ENCODE measurements at regions of chr20 and their contacts with region 1.

Region 1: DNA sequence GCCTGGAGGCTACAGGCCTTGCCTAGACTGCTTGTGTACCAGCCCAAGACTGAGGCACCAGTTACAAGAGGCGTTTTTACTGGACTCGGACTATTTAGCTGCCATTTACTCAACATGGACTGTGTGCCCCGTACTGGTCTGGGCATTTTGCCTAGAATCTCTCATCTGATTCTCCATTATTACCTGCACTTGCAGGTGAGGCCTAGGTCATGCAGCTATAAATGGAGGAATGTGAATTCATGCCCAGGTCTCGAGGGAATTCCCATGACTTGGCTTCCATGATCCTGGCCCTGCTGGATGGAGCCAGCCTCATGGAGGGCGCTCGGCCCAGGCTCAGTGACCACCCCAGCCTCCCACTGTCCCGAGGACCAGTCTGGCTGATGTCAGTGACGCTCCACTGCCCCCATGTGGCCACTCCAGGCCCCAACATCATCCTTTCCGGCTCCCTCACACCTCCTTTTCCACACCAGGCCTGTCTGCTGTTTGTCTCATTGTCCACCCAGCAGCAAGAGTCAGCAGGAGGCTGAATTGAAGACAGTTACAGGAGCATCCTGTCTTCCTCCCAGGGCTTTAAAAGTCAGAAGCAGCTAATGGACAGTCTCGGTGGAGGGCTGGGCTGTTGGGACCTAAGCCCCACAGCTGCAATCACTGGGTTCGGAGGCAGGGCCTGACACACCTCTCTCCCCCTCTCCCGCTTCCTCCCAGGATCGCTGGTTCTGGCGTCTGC is 8.7 kb downstream of the MMP24OS start:
- DNase-seq: peak; percentile 52 to 63
- ATAC-seq: peak; percentile 43 to 76 (median 70)
- H3K4me3 ChIP-seq: no peak overlapping the region
- H3K27ac ChIP-seq: no peak overlapping the region
- H3K4me1 ChIP-seq: peaks cover 0 to 16% (median under 1%) of the 10 kb centered on the region in 9 donors
- H3K27me3 ChIP-seq: no peaks in the 10 kb centered on the region
- CTCF ChIP-seq: peak; percentile 43 to 78 (median 72)

Region 2: DNA sequence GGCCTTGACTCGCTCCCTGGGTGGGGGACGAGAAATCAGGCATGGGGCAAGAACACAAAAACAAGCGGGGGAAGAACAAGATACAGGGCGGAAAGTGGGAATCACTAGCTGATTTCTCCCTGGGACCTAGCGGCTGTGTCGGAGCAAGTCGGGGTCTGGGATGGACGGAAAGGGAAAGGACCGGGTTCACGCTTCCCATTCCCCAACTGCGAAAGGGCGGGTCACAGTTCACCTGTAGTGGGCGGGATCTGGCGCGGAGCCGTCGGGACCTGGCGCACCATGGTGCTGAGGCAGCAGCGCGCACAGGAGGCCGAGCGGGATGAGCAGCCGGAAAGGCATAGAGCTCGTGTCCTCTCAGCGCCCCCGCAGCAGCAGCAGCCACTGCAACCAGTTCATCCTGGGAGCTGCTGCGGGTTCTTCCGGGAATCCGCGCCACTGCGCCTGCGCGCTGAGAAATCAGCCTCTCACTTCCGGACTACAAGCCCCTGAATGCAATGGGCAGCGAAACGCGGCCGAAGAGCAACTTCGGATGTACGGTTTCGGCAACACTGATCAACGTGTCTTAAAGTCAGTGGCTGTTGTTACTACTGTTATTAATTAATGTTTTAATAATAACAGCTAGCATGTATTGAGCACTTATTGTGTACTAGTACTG is 122.2 kb before region 1 on chr20 and contains the start of gene EDEM2:
- intact Hi-C with region 1: loop called in 5 of 10 experiments (anchors 5 to 10 kb)
- DNase-seq: peak; percentile 94 to 97
- ATAC-seq: peak; percentile 95 to 98 (median 96)
- H3K4me3 ChIP-seq: peak within 1 kb of the TSS; percentile 65 to 98 (median 86)
- H3K27ac ChIP-seq: peak within 1 kb of the TSS in 9 of 10 donors; percentile 74 to 88 (median 79)
- H3K4me1 ChIP-seq: peaks cover 6 to 44% (median 27%) of the 10 kb centered on the region in 9 donors
- H3K27me3 ChIP-seq: no peaks in the 10 kb centered on the region
- CTCF ChIP-seq: peak in 1 of 9 donors; percentile 7
- total RNA-seq, gene EDEM2: 7.2 to 26.1 (median 11.0) TPM

Region 3: GRCh38 chr20:35318502-35319157 is 49.4 kb after region 1 on chr20:
- intact Hi-C with region 1: no loop called
- DNase-seq: peak in 1 of 2 donors; percentile 23
- ATAC-seq: peak in 7 of 8 donors; percentile 39 to 90 (median 59)
- H3K4me3 ChIP-seq: no peak overlapping the region
- H3K27ac ChIP-seq: peak overlapping the region in 2 of 10 donors; percentile 10 to 22
- H3K4me1 ChIP-seq: peaks cover 0 to 19% (median 9%) of the 10 kb centered on the region in 9 donors
- H3K27me3 ChIP-seq: no peaks in the 10 kb centered on the region
- CTCF ChIP-seq: no peak

Region 4: GRCh38 chr20:35368666-35369423 is 99.6 kb after region 1 on chr20:
- intact Hi-C with region 1: no loop called
- DNase-seq: peak; percentile 23 to 41
- ATAC-seq: peak; percentile 69 to 97 (median 93)
- H3K4me3 ChIP-seq: no peak overlapping the region
- H3K27ac ChIP-seq: peak overlapping the region in 8 of 10 donors; percentile 22 to 55 (median 36)
- H3K4me1 ChIP-seq: peaks cover 8 to 28% (median 21%) of the 10 kb centered on the region in 9 donors
- H3K27me3 ChIP-seq: no peaks in the 10 kb centered on the region
- CTCF ChIP-seq: no peak

Region 5: DNA sequence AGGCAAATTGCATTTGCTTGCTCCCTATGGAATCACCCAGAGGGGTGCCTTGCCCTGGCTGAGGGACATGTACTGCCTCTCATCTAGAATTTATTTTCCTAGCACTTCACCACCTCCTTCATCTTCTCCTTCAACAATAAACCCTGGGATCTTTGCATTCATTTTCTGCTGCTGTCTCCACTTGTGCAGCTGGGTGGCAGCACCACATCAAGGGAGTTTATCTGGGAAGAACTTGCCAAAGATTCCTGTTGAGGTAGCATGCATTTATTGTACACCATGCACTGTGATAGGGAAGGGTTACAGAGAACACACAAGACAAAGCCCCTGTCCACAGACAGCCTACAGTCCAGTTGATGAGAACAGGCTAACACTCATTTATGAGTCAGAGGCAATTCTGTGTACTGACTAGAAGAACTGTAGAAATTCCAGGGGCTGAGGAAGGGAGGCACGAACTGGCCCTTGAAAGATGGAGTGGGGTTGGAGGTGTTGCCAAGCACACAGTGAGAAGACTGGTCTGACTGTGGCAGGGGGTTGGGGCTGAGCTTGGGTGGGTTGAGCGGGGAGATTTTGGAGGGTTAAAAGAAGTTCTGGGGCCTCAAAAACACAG is 242.7 kb after region 1 on chr20:
- intact Hi-C with region 1: no loop called
- DNase-seq: no peak
- ATAC-seq: peak in 4 of 8 donors; percentile 28 to 45 (median 40)
- H3K4me3 ChIP-seq: no peak overlapping the region
- H3K27ac ChIP-seq: no peak overlapping the region
- H3K4me1 ChIP-seq: peaks cover 0 to 6% (median 0%) of the 10 kb centered on the region in 9 donors
- H3K27me3 ChIP-seq: no peaks in the 10 kb centered on the region
- CTCF ChIP-seq: peak; percentile 41 to 68 (median 55)